Activated B cell treated with CpG ODN at 0.5 μM for 24 hours (primary cell): ENCODE measurements at regions of chr12 and their contacts with region 1.

Region 1: DNA sequence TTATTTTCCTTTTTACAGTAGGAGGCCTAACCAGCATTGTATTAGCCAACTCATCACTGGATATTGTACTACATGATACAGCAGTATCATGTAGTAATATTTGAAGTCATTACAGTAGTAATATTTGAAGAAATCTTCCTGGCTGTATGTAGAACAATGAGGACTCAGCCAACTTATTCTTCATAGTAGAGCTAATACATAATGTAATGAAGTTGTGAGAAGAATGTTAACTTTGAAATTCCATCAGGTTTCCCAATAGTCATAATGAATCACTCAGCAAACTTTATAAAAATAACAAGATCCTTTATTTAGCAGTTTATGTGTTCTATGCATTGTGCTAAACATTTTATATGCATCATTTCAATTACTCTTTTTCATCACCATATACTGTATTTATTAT is 61.8 kb downstream of the LRRK2 start:
- DNase-seq: no peak
- ATAC-seq: no peak
- H3K4me3 Mint-ChIP-seq: no peak overlapping the region
- H3K27ac Mint-ChIP-seq: no peak overlapping the region
- H3K4me1 Mint-ChIP-seq: no peaks in the 10 kb centered on the region
- H3K27me3 Mint-ChIP-seq: no peaks in the 10 kb centered on the region
- CTCF ChIP-seq: no peak

Region 2: DNA sequence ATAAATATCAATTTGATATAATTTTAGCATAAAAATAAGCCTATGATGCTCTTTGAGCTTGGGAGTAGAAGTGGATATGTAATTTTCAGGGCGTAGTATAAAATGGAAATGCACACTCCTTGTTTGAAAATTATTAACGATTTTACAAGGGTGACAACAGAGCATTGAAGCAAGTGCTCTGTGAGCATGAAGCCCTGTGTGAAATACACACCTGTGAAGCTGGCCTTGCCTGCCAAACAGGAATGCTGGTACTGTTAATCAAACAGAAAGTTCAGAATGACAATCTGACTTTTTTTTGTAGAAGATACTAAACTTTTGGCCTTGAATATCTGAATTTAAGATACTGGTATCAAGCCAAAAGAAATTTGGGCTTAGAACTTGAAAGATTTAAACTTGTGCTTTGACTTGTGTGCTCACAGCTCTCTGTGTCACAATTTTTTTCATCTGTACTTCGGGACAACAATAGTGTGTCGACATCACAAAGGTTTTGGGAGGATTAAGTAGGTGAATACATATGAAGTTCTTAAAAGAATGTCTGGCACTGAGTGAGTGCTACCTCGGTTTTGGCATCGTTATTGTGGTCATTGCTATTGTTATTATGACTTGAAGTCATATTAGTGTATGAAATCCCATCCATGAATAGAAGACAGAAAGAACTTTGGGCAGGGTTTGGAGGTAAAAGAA is 14.5 kb before region 1 on chr12:
- CTCF ChIA-PET with region 1: no interaction called
- POLR2A ChIA-PET with region 1: no interaction called
- intact Hi-C with region 1: loop called (anchors 2 kb)
- DNase-seq: no peak
- ATAC-seq: no peak
- H3K4me3 Mint-ChIP-seq: no peak overlapping the region
- H3K27ac Mint-ChIP-seq: no peak overlapping the region
- H3K4me1 Mint-ChIP-seq: no peaks in the 10 kb centered on the region
- H3K27me3 Mint-ChIP-seq: no peaks in the 10 kb centered on the region
- CTCF ChIP-seq: no peak

Region 3: GRCh38 chr12:40300490-40300889 is 13.9 kb after region 1 on chr12:
- CTCF ChIA-PET with region 1: no interaction called
- POLR2A ChIA-PET with region 1: no interaction called
- intact Hi-C with region 1: loop called (anchors 2 kb)
- DNase-seq: no peak
- ATAC-seq: no peak
- H3K4me3 Mint-ChIP-seq: no peak overlapping the region
- H3K27ac Mint-ChIP-seq: peak overlapping the region; percentile 20
- H3K4me1 Mint-ChIP-seq: no peaks in the 10 kb centered on the region
- H3K27me3 Mint-ChIP-seq: no peaks in the 10 kb centered on the region
- CTCF ChIP-seq: no peak